Activated naive CD4-positive, alpha-beta T cell treated with anti-CD3 and anti-CD28 coated beads for 36 hours (primary cell): ENCODE measurements at regions of chr4 and their contacts with region 1.

Region 1: GRCh38 chr4:2281575-2282343 is 19.9 kb upstream of the MXD4 start:
- DNase-seq: peak; percentile 94
- H3K4me3 Mint-ChIP-seq: peak overlapping the region; percentile 17
- H3K27ac Mint-ChIP-seq: peak overlapping the region; percentile 98
- H3K4me1 Mint-ChIP-seq: peaks cover 37% of the 10 kb centered on the region
- H3K27me3 Mint-ChIP-seq: no peaks in the 10 kb centered on the region

Region 2: GRCh38 chr4:1939664-1940509 is 341.9 kb before region 1 on chr4:
- CTCF ChIA-PET with region 1: no interaction called
- intact Hi-C with region 1: no loop called
- DNase-seq: no peak
- H3K4me3 Mint-ChIP-seq: no peak overlapping the region
- H3K27ac Mint-ChIP-seq: no peak overlapping the region
- H3K4me1 Mint-ChIP-seq: no peaks in the 10 kb centered on the region
- H3K27me3 Mint-ChIP-seq: no peaks in the 10 kb centered on the region

Region 3: DNA sequence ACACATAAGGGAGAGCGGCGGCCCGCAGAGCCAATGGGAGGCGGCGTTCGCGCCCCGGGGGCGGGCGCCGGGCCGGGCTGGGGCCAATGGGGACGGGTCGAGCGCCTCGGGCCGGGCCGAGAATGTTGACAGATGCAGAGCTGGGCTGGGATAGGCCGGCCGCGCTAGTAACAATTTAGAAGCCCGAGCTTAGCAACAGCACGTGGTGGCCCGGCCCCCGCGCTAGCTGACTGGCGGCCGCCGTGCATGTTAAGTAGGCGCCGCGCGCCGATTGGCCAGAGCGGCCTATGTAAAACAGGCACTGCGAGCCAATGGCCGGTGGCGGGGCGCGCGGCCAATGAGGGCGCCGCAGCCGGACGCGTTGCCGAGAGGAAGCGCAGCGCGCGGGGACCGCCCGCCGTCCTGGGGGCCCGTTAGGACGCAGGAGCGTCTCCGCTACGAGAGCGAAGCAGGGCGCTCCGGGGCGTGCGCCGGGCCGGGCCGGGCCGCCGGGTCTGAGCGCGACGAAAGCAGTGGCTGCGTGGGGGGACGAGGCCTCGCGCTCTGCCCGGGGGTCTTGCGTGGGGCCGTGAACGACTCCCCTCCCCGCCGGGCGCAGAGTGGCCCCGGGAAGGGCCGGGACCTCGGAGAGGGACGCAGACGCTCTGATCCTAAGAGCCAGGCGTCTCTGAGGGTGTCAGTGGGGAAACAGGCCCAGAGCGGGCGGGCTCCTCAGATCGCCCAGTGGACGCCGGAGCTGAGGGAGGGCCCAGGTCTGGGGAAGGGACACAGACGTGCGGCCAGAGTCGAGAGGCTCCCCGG is 19.4 kb before region 1 on chr4:
- CTCF ChIA-PET with region 1: no interaction called
- intact Hi-C with region 1: loop called (anchors 1 kb)
- DNase-seq: peak; percentile 98
- H3K4me3 Mint-ChIP-seq: peak overlapping the region; percentile 69
- H3K27ac Mint-ChIP-seq: no peak overlapping the region
- H3K4me1 Mint-ChIP-seq: peaks cover 2% of the 10 kb centered on the region
- H3K27me3 Mint-ChIP-seq: no peaks in the 10 kb centered on the region

Region 4: GRCh38 chr4:2364654-2365053 is 82.9 kb after region 1 on chr4:
- CTCF ChIA-PET with region 1: no interaction called
- intact Hi-C with region 1: loop called (anchors 5 kb)
- DNase-seq: peak; percentile 72
- H3K4me3 Mint-ChIP-seq: peak overlapping the region; percentile 70
- H3K27ac Mint-ChIP-seq: peak overlapping the region; percentile 24
- H3K4me1 Mint-ChIP-seq: peaks cover 9% of the 10 kb centered on the region
- H3K27me3 Mint-ChIP-seq: no peaks in the 10 kb centered on the region

Region 5: DNA sequence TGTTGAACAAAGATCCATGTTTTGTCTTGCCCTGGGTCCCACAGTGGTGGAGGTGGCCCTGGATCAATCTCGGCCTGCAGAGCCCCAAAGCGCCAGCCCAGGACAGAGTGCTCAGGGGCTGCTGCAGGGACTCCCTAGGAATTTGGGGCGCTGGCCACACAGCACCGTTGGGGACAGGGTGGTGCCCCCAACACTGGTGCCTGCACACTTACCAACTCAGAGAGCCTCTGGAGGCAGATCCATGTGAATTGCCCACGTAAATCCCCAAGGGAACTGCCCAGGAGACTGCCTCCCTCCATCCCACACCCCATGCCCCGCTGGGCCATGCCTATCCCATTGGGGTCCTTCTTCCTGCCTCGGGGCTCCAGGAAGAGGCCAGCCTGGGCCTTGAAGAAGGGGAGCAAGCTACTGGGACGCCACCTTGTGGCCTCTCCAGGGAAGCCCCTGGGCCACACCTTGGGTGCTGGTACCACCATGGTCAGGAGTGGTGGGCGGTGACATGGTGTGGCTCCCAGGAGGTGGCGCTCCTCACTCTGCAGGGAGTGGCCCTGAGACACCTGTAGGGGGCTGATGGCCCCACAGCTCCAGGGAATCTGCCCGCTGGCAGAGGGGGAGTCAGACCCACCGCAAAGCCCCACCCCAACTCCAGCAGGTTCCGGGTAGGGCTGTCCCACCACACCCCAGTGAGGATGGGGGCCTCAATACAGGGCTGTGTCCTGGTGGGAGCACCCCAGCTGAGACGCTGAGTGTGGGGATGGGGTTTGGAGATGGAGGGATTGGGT is 159.8 kb after region 1 on chr4:
- CTCF ChIA-PET with region 1: interaction called, 6 read pairs
- intact Hi-C with region 1: loop called (anchors 1 kb)
- DNase-seq: peak; percentile 86
- H3K4me3 Mint-ChIP-seq: no peak overlapping the region
- H3K27ac Mint-ChIP-seq: no peak overlapping the region
- H3K4me1 Mint-ChIP-seq: peaks cover 2% of the 10 kb centered on the region
- H3K27me3 Mint-ChIP-seq: no peaks in the 10 kb centered on the region